Activated CD4-positive, alpha-beta memory T cell treated with anti-CD3 and anti-CD28 coated beads, Interleukin-2, amount 10 ng/mL, durations not matched to agents 7 days and 5 days (primary cell): ENCODE measurements at regions of chr7 and their contacts with region 1.

Region 1: GRCh38 chr7:139095194-139095659 is 14.3 kb downstream of the ZC3HAV1 start:
- DNase-seq: peak; percentile 91
- H3K4me3 Mint-ChIP-seq: peak overlapping the region; percentile 78
- H3K27ac Mint-ChIP-seq: peak overlapping the region; percentile 92
- H3K4me1 Mint-ChIP-seq: peaks cover 85% of the 10 kb centered on the region
- H3K27me3 Mint-ChIP-seq: no peaks in the 10 kb centered on the region

Region 2: GRCh38 chr7:139043823-139044812 is 51.1 kb before region 1 on chr7:
- CTCF ChIA-PET with region 1: interaction called, 5 read pairs
- POLR2A ChIA-PET with region 1: interaction called, 15 read pairs
- DNase-seq: peak; percentile 85
- H3K4me3 Mint-ChIP-seq: peak overlapping the region; percentile 58
- H3K27ac Mint-ChIP-seq: peak overlapping the region; percentile 80
- H3K4me1 Mint-ChIP-seq: peaks cover 78% of the 10 kb centered on the region
- H3K27me3 Mint-ChIP-seq: peaks cover 2% of the 10 kb centered on the region

Region 3: DNA sequence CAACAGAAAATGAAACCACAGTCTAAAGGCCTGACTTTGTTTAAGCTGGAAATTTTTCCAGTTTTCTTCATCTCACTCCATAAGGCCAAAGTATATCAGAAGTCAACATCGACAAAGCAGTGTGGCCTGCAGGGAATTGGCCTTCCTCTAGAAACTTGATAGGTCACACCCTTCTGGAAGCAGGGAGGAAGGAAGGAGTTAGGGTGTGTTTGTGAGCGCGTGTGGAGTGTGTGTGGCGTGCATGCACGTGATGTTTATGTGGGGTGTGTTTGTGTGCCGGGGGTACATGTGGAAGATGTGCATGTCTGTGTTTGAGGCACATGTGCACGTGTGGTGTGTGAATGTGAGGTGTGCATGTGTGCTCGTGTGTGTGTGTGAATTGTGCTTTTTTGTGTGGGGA is 14.3 kb before region 1 on chr7:
- CTCF ChIA-PET with region 1: interaction called, 37 read pairs
- POLR2A ChIA-PET with region 1: interaction called, 42 read pairs
- DNase-seq: no peak
- H3K4me3 Mint-ChIP-seq: peak overlapping the region; percentile 15
- H3K27ac Mint-ChIP-seq: peak overlapping the region; percentile 70
- H3K4me1 Mint-ChIP-seq: peaks cover 90% of the 10 kb centered on the region
- H3K27me3 Mint-ChIP-seq: no peaks in the 10 kb centered on the region

Region 4: DNA sequence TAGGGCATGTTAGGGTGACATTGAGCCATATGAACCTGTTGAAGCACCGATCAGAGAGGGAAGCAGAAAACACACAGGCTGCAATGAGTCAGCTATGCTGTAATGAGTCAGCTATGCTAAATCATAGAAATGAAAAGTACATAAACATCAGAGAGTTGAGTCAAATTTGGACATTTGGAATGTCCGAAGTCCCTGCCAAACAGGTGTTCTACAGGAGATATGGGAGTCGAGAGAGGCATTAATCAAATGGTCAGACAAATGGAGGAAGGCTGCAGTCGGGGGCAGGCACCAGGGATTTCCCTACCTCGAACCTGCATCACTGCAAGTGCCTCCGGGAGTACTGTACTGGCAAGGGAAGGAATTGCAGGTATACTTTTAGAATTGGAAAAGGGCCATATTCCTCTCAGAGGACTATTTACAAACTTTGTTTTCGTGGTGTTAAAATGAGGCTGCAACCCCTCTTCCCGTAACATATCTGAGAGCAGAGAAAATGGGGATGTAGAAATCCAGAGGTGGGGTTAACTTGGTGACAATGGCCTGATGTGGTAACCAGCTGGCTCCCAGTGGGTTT is 23.1 kb after region 1 on chr7:
- CTCF ChIA-PET with region 1: interaction called, 6 read pairs
- POLR2A ChIA-PET with region 1: interaction called, 29 read pairs
- DNase-seq: peak; percentile 57
- H3K4me3 Mint-ChIP-seq: peak overlapping the region; percentile 56
- H3K27ac Mint-ChIP-seq: peak overlapping the region; percentile 56
- H3K4me1 Mint-ChIP-seq: peaks cover 31% of the 10 kb centered on the region
- H3K27me3 Mint-ChIP-seq: no peaks in the 10 kb centered on the region

Region 5: DNA sequence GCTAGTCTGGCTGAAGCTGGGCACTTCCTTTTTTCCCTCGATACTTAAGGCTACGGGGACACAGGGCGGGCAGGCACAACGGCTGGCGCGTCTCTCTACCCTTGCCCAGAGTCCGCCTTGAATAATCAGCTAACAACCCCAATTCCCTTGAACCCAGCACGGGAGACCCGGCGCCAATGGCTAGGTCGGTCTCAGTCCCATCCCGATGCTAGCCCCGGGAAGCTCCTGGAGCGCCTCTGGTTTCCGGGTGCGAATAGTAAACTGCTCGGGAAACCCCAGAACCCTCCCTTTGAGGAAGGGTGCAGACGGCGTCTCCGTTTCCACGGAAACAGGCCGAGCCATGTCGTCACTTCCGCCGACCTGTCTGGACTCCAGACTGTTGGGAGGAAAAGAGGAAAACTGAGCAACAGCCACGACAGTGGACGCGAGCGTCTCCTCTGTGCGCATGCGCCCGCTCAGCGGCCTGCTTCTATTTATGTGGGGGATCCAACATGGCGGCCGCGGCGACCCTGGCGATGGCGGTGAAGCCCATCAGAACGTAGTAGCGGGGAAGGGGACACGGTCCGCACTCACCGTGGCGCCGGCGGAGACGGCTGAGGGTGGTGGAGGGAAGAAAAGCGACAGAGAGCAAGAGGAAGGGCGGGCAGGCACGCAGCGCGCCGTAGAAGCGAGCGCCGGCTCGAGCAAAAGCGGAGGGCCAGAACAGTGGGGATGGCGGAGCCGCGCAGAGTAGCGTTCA is 135.7 kb after region 1 on chr7 and contains the start of gene UBN2:
- CTCF ChIA-PET with region 1: no interaction called
- POLR2A ChIA-PET with region 1: interaction called, 15 read pairs
- DNase-seq: peak; percentile 91
- H3K4me3 Mint-ChIP-seq: peak within 1 kb of the TSS; percentile 98
- H3K27ac Mint-ChIP-seq: peak within 1 kb of the TSS; percentile 78
- H3K4me1 Mint-ChIP-seq: peaks cover 25% of the 10 kb centered on the region
- H3K27me3 Mint-ChIP-seq: peaks cover 20% of the 10 kb centered on the region
- total RNA-seq, gene UBN2: 11.6 to 12.0 TPM